ENCODE measurements at regions of chr6 and their contacts with region 1.

Region 1: DNA sequence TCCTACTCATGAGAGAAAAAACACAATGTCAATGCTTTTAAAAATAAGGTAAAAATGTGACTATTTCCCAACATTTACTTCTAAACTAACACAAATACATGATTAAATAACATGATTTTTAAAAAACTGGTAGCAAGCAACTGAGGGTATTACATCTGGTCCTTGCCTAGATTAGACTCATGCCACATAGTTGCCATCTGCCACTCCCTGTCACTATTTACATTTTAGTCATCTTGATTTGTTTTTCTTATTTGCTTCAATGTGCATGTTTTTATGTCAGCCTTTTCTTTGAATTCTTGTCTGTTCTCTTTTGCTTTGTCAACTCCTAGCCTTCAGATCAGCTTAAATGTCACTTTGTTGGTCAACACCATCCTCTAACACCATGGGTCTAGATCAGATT is 207.0 kb upstream of the SIM1 start:
- DNase-seq: no peak
- ATAC-seq: no peak
- H3K4me3 ChIP-seq: no peak overlapping the region
- H3K27ac ChIP-seq: no peak overlapping the region
- H3K4me1 ChIP-seq: no peaks in the 10 kb centered on the region
- H3K27me3 ChIP-seq: no peaks in the 10 kb centered on the region
- CTCF ChIP-seq: no peak

Region 2: DNA sequence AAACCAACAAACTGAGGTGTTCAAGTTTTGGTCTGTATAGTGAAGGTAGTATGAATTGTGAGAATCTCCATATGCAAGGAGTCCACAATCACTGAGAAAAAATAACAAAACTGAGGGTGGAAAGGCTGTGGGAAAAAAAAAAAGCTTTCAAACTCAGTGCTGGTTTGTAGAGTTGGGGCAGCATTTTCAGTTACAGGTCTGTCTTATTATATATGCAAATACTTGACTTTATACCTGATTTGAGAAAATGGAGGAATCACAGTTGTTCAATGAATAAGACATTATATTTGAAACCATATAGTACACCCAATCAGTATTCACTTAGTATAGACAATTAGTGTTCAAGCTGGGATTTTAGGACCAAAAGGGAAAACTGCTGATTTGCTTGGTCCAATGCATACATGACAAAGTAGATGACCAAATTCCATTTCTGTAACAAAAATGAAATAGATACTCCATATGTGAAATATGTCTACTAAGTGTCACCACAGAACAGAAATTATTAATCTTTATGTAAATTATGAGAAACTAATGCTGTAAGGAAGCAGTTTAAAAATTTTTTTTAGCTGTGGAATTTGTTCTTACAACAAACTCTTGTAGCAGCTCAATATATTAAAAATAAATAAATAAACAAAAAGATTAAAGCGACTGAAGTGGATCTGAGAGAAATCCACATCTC is 21.6 kb after region 1 on chr6:
- CTCF ChIA-PET with region 1: no interaction called
- POLR2A ChIA-PET with region 1: no interaction called
- in situ Hi-C with region 1: no loop called
- intact Hi-C with region 1: loop called (anchors 1 kb)
- DNase-seq: no peak
- ATAC-seq: no peak
- H3K4me3 ChIP-seq: no peak overlapping the region
- H3K27ac ChIP-seq: no peak overlapping the region
- H3K4me1 ChIP-seq: no peaks in the 10 kb centered on the region
- H3K27me3 ChIP-seq: no peaks in the 10 kb centered on the region
- CTCF ChIP-seq: no peak

Measured in Panc1 (cell line).